ENCODE measurements at regions of chr4 and their contacts with region 1.

Region 1: DNA sequence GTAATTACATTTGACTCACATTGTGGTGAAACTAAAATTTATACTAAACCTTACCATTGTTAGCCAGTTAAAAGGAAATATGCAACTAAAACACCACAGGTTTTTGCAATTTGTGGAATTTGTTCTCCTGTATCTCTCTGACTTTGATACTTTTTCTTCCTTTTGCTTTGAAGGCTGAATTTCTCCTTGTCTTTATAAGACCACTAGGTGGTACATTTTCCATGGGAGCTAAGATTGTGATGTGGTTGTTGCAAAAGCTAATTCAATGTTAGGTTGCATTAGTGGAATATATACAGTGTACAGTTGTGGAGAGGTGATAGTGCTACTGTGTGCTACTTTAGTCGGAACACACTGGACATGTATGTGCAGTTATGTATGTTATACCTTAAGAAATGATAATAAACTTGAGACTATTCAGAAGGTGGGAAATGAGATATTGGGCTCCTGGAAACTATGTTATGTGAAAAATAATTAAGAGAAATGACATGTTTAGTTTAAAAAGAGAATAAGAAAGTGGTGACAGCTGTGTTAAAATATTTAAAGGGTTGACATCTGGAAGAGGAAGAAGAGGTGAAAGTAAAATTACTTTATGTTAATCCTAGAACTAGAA is 70.3 kb downstream of the ARL9 start:
- DNase-seq: no peak
- ATAC-seq: peak in 1 of 4 donors; percentile 46
- H3K4me3 ChIP-seq: no peak overlapping the region
- H3K27ac ChIP-seq: no peak overlapping the region
- H3K4me1 ChIP-seq: no peaks in the 10 kb centered on the region
- H3K27me3 ChIP-seq: peaks cover 0 to 2% (median 0%) of the 10 kb centered on the region in 3 donors
- CTCF ChIP-seq: peak; percentile 57

Region 2: DNA sequence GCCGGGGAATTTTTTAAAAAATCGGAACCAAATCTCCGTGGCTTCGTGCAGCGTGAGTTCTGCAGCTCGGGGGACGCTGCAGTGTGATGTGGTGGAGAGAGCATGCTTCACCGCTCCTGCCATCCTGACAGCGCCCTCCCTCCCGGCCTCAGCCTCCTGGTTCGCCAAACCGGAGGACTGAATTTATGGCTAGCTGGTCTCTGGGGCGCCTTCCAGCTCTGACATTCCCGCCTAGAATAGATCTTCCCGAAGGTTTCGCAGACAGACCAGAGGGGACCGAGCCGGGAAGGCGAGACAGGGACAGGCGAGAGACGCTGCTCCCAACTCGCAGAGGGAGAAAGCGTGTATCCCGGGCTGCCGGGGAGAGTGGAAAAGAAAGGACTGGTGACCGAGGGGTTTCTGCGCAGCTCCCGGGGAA is 79.3 kb after region 1 on chr4:
- intact Hi-C with region 1: loop called (anchors 10 kb)
- DNase-seq: peak; percentile 54 to 81
- ATAC-seq: peak; percentile 79 to 89 (median 85)
- H3K4me3 ChIP-seq: peak overlapping the region; percentile 79
- H3K27ac ChIP-seq: peak overlapping the region; percentile 77
- H3K4me1 ChIP-seq: peaks cover 31% of the 10 kb centered on the region
- H3K27me3 ChIP-seq: no peaks in the 10 kb centered on the region
- CTCF ChIP-seq: no peak

Region 3: DNA sequence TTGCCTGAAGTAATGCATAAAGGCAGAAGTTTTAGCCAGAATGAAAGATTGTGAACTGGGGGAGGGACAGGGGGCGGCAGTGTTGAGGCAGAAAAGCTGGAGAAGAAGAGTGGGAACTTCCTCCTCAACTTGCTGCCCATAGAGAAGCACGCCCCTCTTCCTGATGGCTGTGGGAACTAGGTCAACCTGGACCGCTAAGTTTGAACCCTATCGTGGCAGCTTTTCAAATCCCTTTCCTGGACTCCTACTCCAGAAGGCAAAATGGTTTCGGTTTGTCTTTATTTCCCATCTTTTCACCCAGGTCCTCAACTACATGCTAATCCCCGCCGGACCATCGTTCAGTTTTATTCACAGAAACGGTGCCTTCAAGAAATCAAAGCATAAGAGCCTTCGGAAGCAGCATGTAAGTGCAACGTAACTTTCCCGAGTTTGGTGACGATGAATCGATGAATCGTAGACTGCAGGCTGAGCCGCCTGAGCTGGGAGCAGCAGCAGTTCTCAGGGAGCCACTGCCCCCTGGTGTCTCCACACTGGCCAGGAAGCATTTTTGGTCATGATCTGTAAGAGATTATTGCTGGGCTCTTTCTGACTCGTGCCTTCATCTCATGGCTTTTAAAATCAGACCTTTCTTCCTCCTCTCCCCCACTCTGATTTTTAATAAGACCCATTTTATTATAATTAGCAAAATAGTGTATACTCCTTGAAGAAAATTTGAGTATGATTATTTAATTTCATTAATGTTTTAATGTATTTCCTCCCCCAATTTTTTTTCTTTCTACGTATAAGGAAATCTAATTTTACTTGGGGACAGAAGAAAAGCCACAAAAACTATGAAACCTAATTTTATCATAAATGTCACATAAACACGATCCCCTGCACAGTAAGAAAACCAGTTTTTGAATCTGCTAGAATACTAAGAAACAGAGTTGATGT is 224.2 kb after region 1 on chr4:
- intact Hi-C with region 1: loop called (anchors 1 to 5 kb)
- DNase-seq: peak; percentile 77 to 87
- ATAC-seq: peak; percentile 94 to 100 (median 98)
- H3K4me3 ChIP-seq: peak overlapping the region; percentile 71
- H3K27ac ChIP-seq: peak overlapping the region; percentile 7
- H3K4me1 ChIP-seq: no peaks in the 10 kb centered on the region
- H3K27me3 ChIP-seq: no peaks in the 10 kb centered on the region
- CTCF ChIP-seq: peak; percentile 94

Region 4: DNA sequence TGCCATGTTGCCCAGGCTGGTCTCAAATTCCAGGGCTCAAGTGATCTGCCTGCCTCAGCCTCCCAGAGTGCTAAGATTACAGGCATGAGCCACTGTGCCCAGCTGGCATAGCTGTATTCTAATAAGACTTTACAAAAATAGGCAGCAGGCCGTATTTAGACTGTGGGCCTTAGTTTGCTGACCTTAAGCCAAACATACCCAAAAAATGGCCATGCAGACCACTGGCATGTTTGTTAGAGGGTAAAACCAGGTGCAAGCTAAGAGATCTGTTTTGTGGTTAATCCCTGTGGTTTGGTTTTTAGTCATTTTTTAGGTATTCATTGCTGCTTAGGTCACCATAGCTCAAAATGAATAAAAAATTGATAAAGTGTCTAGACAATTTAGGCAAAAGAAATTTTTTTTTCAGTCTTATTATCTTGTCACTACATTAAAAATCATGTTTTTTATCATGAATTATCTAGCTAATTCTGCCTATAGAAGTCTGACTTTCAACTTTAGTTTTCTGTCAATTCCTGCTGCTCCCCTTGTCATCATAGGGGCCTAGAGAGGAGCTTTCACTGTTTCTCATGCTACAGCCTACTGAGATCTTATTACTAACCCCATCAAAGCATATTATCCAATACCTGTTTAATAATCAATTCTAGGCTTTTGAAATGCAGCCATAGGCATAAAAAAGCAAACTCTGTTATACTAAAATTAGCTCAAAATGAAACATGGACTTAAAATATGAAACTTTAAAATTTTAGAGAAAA is 253.0 kb after region 1 on chr4:
- intact Hi-C with region 1: loop called (anchors 10 kb)
- DNase-seq: no peak
- ATAC-seq: peak in 3 of 4 donors; percentile 50 to 62 (median 62)
- H3K4me3 ChIP-seq: no peak overlapping the region
- H3K27ac ChIP-seq: peak overlapping the region; percentile 20
- H3K4me1 ChIP-seq: peaks cover 3% of the 10 kb centered on the region
- H3K27me3 ChIP-seq: no peaks in the 10 kb centered on the region
- CTCF ChIP-seq: no peak